Transverse colon (tissue), 4 donors: ENCODE measurements at regions of chr9 and their contacts with region 1.

Region 1: DNA sequence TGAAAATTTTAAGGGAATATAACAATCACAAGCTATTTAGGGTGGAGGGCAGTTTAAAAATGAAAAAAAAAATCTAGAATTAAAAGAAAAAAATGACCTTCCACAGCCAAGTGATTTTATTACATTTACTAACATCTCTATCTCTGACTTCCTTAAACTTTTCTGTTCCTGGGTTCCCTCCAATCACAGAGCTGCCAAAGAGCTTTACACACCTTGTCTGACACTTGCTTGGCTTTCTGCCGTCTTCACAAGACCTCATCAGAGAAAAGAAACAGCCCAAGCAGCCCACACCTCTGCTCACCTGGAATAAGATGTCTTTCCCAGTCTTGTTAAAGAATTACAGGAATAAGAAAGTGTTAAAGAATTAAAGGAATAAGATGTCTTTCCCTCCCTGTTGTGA is 38.9 kb downstream of the PSMB7 start:
- DNase-seq: no peak
- H3K4me3 ChIP-seq: no peak overlapping the region
- H3K27ac ChIP-seq: no peak overlapping the region
- H3K4me1 ChIP-seq: peaks cover 0 to 7% (median 0%) of the 10 kb centered on the region in 4 donors
- H3K27me3 ChIP-seq: no peaks in the 10 kb centered on the region
- CTCF ChIP-seq: no peak
- EP300 ChIP-seq: no peak
- POLR2A ChIP-seq: no peak

Region 2: GRCh38 chr9:124342776-124343485 is 33.4 kb before region 1 on chr9:
- in situ Hi-C with region 1: no loop called
- intact Hi-C with region 1: loop called (anchors 1 kb)
- DNase-seq: peak; percentile 37
- H3K4me3 ChIP-seq: no peak overlapping the region
- H3K27ac ChIP-seq: peak overlapping the region; percentile 34 to 72 (median 57)
- H3K4me1 ChIP-seq: peaks cover 4 to 13% (median 8%) of the 10 kb centered on the region in 4 donors
- H3K27me3 ChIP-seq: no peaks in the 10 kb centered on the region
- CTCF ChIP-seq: no peak
- EP300 ChIP-seq: no peak
- POLR2A ChIP-seq: no peak

Region 3: DNA sequence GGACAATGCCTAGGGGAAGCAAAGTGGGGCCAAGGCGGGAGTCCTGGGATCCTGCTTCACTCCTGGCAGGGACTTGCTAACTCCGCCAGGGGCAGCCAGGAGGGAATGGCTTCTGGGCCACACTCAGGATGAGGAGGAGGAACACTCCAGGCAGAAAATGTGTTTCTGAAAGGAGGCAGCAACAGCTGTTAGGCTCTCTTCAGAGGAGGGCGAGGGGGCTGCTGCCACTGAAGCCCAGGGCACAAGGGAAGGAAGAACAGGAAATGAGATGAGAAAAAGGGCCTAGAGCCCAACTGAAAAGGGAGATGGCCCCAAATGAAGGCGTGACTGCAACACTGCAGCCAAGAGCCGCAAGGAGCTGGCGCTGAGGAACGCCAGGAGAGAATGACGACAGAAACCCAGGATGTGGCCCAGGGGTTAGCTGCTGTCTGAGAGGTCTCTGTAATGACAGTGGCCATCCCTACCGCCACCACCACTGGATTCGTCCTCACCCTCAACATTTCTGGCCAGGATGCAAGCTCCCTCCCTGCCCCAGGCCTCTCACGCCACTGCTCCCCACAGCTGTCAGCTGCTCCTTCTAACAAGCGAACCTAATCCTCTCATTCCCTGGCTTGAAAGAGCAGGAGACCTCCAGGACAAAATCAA is 23.1 kb after region 1 on chr9:
- in situ Hi-C with region 1: no loop called
- intact Hi-C with region 1: no loop called
- DNase-seq: no peak
- H3K4me3 ChIP-seq: no peak overlapping the region
- H3K27ac ChIP-seq: peak overlapping the region; percentile 16 to 31 (median 22)
- H3K4me1 ChIP-seq: peaks cover 0 to 12% (median 2%) of the 10 kb centered on the region in 4 donors
- H3K27me3 ChIP-seq: no peaks in the 10 kb centered on the region
- CTCF ChIP-seq: no peak
- EP300 ChIP-seq: no peak
- POLR2A ChIP-seq: no peak